A549 (cell line): ENCODE measurements at regions of chr15 and their contacts with region 1.

Region 1: DNA sequence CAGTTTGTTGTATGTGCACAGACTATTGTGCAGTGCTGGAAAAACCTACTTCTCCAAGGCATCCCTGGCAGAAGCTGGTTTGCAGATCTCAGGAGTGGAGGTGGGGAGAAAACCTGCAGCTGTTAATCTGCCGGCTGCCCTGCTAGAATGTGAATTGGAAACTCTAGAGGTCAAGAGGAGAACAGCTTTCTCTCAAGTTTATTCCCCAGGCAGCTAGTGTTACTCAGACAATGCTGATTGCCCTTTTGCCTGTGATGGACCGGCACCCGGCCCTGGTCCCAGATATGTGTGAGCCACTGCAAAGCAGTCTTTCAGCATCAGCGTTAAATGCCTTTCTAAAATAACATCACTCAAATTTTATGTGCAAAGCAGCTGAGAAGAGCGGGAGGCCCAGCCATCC is 129.7 kb upstream of the TPM1 start:
- DNase-seq: peak in 1 of 2 experiments; percentile 39
- ATAC-seq: peak; percentile 89 to 92
- H3K4me3 ChIP-seq: no peak overlapping the region
- H3K27ac ChIP-seq: peak overlapping the region in 1 of 2 experiments; percentile 34; a peak in 2 of 6 replicates
- H3K4me1 ChIP-seq: peaks cover 12% of the 10 kb centered on the region
- CTCF ChIP-seq: no peak
- EP300 ChIP-seq: no peak
- POLR2A ChIP-seq: no peak
- RAD21 ChIP-seq: 0 out of 5 replicates have a peak, but pooled peaks of 1 of the 2 experiments have one; percentile 12

Region 2: DNA sequence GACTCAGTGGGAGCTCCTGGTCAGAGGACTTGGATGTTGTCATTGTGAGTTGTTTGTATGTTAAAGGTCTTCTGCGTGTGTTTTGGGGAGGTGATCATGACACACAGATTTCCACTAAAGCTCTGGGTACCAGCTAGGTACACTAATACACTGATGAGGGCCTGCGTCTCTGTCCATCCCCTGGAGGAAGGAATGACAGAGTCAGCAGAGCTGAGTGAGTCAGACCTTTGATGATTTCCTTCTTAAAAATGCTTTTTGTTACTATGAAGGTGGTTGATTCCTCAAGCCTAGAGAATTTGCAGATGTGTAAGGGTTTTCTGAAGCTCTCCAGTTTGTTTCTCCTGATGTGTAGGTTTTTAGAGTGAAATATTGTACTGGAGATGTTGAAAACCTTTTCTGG is 294.4 kb before region 1 on chr15:
- CTCF ChIA-PET with region 1: no interaction called
- POLR2A ChIA-PET with region 1: no interaction called
- DNase-seq: peak in 1 of 2 experiments; percentile 22
- ATAC-seq: peak; percentile 83 to 89
- H3K4me3 ChIP-seq: no peak overlapping the region
- H3K27ac ChIP-seq: no peak overlapping the region
- H3K4me1 ChIP-seq: peaks cover 15% of the 10 kb centered on the region
- CTCF ChIP-seq: no peak; the same call in 2 of the 3 replicates
- EP300 ChIP-seq: no peak
- POLR2A ChIP-seq: no peak
- RAD21 ChIP-seq: no peak

Region 3: GRCh38 chr15:62845241-62846133 is 67.3 kb before region 1 on chr15:
- CTCF ChIA-PET with region 1: no interaction called
- POLR2A ChIA-PET with region 1: no interaction called
- DNase-seq: peak; percentile 51 to 68
- ATAC-seq: peak; percentile 37 to 64; a peak in 5 of 6 replicates
- H3K4me3 ChIP-seq: no peak overlapping the region
- H3K27ac ChIP-seq: peak overlapping the region; percentile 91
- H3K4me1 ChIP-seq: peaks cover 67% of the 10 kb centered on the region
- CTCF ChIP-seq: no peak
- EP300 ChIP-seq: 0 out of 5 replicates have a peak, but pooled peaks of 1 of the 2 experiments have one; percentile 15
- POLR2A ChIP-seq: no peak
- RAD21 ChIP-seq: peak in 1 of 2 experiments; percentile 5; a peak in 1 of 5 replicates

Region 4: DNA sequence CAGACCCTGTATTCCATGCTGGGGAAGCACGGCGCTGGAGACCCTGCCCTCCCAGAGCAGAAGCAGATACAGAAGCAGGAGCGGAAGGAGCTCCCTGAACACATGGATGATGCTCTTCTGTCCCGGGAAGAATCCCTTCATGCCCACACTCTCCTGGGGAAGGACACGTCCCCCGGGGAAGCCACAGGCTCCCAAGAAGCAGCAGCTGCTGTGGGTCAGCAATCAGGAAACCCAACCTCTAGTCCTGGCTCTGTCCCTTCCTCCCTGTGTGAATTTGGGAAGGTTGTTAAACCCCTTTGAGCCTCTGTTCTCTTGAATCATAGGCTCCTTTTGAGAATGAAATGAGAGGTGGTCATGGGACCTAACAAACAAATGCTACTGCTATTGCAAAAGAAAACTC is 46.4 kb before region 1 on chr15:
- CTCF ChIA-PET with region 1: no interaction called
- POLR2A ChIA-PET with region 1: no interaction called
- DNase-seq: no peak
- ATAC-seq: peak; percentile 27 to 32; a peak in 2 of 6 replicates
- H3K4me3 ChIP-seq: no peak overlapping the region
- H3K27ac ChIP-seq: peak overlapping the region in 1 of 2 experiments; percentile 52; a peak in 2 of 6 replicates
- H3K4me1 ChIP-seq: no peaks in the 10 kb centered on the region
- CTCF ChIP-seq: no peak
- EP300 ChIP-seq: no peak
- POLR2A ChIP-seq: no peak
- RAD21 ChIP-seq: no peak

Region 5: GRCh38 chr15:62928242-62928995 is 15.6 kb after region 1 on chr15:
- CTCF ChIA-PET with region 1: interaction called, 17 read pairs
- POLR2A ChIA-PET with region 1: no interaction called
- DNase-seq: peak; percentile 76 to 87
- ATAC-seq: peak; percentile 88 to 93
- H3K4me3 ChIP-seq: no peak overlapping the region
- H3K27ac ChIP-seq: peak overlapping the region; percentile 79 to 89
- H3K4me1 ChIP-seq: peaks cover 42% of the 10 kb centered on the region
- CTCF ChIP-seq: peak; percentile 49; the same call in 2 of the 3 replicates
- EP300 ChIP-seq: peak; percentile 66 to 68; a peak in 3 of 5 replicates
- POLR2A ChIP-seq: no peak
- RAD21 ChIP-seq: peak; percentile 61 to 65